Activated CD4-positive, alpha-beta memory T cell treated with anti-CD3 and anti-CD28 coated beads, Interleukin-2, amount 10 ng/mL, durations not matched to agents 7 days and 5 days (primary cell): ENCODE measurements at regions of chr6 and their contacts with region 1.

Region 1: GRCh38 chr6:27809939-27810767 is 102.0 kb downstream of the OR2B2 start:
- DNase-seq: peak; percentile 83
- H3K4me3 Mint-ChIP-seq: peak overlapping the region; percentile 85
- H3K27ac Mint-ChIP-seq: peak overlapping the region; percentile 99
- H3K4me1 Mint-ChIP-seq: peaks cover 62% of the 10 kb centered on the region
- H3K27me3 Mint-ChIP-seq: no peaks in the 10 kb centered on the region

Region 2: GRCh38 chr6:26122793-26123674 is 1687.1 kb before region 1 on chr6:
- CTCF ChIA-PET with region 1: no interaction called
- POLR2A ChIA-PET with region 1: interaction called, 39 read pairs
- DNase-seq: peak; percentile 95
- H3K4me3 Mint-ChIP-seq: peak overlapping the region; percentile 97
- H3K27ac Mint-ChIP-seq: peak overlapping the region; percentile 100
- H3K4me1 Mint-ChIP-seq: peaks cover 40% of the 10 kb centered on the region
- H3K27me3 Mint-ChIP-seq: no peaks in the 10 kb centered on the region

Region 3: DNA sequence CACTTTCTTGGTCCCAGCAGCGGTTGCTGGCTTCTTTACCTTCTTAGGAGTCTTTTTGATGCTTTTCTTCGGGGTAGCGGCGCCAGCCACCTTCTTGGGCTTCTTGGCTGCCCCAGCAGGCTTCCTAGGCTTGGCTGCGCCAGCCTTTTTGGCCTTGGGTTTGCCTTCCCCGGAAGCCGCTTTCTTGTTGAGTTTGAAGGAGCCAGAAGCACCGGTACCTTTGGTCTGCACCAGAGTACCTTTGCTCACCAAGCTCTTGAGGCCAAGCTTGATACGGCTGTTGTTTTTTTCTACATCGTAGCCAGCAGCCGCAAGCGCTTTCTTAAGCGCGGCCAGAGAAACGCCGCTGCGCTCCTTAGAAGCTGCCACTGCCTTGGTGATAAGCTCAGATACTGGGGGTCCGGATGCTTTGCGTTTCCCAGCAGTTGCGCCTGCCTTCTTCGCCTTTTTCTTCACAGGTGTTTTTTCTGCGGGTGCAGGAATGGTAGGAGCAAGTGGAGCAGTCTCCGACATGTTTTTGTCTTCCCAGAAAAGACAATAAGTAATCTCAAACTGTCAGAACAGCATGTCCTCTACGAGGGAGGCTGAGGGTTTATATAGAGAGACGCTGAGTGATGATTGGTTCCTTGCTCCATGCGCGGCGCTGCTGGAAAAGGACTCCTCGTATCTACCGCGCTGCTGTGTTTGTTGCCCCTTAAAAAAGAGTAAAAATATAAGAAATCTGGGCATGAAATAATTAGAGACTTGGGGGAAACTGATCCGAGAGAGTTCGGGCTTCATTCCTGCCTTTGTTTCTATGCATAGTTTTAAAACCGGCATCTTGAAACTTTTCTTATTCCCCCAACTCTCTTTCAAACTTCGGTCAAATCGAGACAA is 1575.5 kb before region 1 on chr6:
- CTCF ChIA-PET with region 1: no interaction called
- POLR2A ChIA-PET with region 1: interaction called, 74 read pairs
- DNase-seq: peak; percentile 85
- H3K4me3 Mint-ChIP-seq: peak overlapping the region; percentile 76
- H3K27ac Mint-ChIP-seq: peak overlapping the region; percentile 95
- H3K4me1 Mint-ChIP-seq: peaks cover 41% of the 10 kb centered on the region
- H3K27me3 Mint-ChIP-seq: no peaks in the 10 kb centered on the region

Region 4: GRCh38 chr6:27146706-27147505 is 663.2 kb before region 1 on chr6:
- CTCF ChIA-PET with region 1: interaction called, 4 read pairs
- POLR2A ChIA-PET with region 1: interaction called, 440 read pairs
- DNase-seq: peak; percentile 87
- H3K4me3 Mint-ChIP-seq: no peak overlapping the region
- H3K27ac Mint-ChIP-seq: no peak overlapping the region
- H3K4me1 Mint-ChIP-seq: peaks cover 31% of the 10 kb centered on the region
- H3K27me3 Mint-ChIP-seq: no peaks in the 10 kb centered on the region

Region 5: GRCh38 chr6:27772261-27773001 is 37.7 kb before region 1 on chr6:
- CTCF ChIA-PET with region 1: interaction called, 15 read pairs
- POLR2A ChIA-PET with region 1: interaction called, 33 read pairs
- DNase-seq: peak; percentile 94
- H3K4me3 Mint-ChIP-seq: peak overlapping the region; percentile 6
- H3K27ac Mint-ChIP-seq: peak overlapping the region; percentile 46
- H3K4me1 Mint-ChIP-seq: peaks cover 22% of the 10 kb centered on the region
- H3K27me3 Mint-ChIP-seq: peaks cover 19% of the 10 kb centered on the region

Region 6: DNA sequence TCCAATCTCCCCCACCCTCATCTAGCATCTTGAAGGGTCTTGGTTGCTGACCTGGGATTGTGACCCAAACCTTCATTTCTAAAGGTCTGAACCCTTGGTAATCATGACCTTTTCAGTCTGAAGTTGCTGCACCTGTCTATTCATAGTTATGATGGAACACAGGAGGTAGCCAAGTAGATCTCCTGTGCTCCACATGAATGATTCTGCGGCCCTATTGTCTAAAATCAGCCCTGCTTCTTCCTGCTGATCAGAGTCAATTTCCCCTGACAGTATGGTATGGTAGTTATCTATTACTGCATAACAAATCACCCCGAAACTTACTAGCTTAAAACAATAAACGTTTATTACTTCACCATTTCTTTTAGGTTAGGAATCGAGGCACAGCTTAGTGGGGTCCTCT is 155.9 kb after region 1 on chr6:
- CTCF ChIA-PET with region 1: no interaction called
- POLR2A ChIA-PET with region 1: no interaction called
- DNase-seq: no peak
- H3K4me3 Mint-ChIP-seq: no peak overlapping the region
- H3K27ac Mint-ChIP-seq: no peak overlapping the region
- H3K4me1 Mint-ChIP-seq: no peaks in the 10 kb centered on the region
- H3K27me3 Mint-ChIP-seq: peaks cover 7% of the 10 kb centered on the region

Region 7: DNA sequence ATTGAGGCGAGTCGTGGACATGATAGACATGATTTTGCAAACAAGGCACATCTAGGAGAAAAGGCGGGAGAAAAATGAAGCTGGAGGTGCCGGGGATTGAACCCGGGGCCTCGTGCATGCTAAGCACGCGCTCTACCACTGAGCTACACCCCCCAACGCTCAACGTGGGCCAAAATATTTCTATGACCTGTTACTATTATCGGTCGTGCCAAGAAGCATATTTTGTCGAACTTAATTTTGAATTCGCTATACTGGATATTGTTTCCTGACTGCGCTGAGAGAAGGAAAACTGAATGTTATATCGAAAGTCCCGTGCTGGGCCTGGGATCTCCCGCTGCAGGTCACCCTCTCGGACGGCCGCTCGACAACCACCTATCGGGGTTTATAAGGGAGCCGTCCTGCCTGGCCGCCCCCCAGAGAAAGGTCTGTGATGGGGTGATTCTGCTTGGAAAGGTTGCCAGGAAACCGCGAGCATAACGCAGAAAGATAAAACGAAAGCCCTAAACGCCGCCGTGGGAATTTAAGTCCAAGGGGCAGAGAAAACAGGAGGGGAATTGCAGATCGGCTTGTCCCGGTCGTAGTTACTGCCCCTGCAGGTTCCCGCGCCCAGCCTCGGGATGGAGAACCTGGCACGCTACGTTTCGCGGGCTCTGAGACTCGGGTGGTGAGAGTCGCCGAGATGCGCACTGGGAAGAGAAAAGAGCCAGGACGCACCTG is 1053.6 kb after region 1 on chr6:
- CTCF ChIA-PET with region 1: no interaction called
- POLR2A ChIA-PET with region 1: interaction called, 10 read pairs
- DNase-seq: peak; percentile 85
- H3K4me3 Mint-ChIP-seq: peak overlapping the region; percentile 81
- H3K27ac Mint-ChIP-seq: peak overlapping the region; percentile 76
- H3K4me1 Mint-ChIP-seq: peaks cover 46% of the 10 kb centered on the region
- H3K27me3 Mint-ChIP-seq: peaks cover 12% of the 10 kb centered on the region